ENCODE measurements at regions of chr10 and their contacts with region 1.

Region 1: DNA sequence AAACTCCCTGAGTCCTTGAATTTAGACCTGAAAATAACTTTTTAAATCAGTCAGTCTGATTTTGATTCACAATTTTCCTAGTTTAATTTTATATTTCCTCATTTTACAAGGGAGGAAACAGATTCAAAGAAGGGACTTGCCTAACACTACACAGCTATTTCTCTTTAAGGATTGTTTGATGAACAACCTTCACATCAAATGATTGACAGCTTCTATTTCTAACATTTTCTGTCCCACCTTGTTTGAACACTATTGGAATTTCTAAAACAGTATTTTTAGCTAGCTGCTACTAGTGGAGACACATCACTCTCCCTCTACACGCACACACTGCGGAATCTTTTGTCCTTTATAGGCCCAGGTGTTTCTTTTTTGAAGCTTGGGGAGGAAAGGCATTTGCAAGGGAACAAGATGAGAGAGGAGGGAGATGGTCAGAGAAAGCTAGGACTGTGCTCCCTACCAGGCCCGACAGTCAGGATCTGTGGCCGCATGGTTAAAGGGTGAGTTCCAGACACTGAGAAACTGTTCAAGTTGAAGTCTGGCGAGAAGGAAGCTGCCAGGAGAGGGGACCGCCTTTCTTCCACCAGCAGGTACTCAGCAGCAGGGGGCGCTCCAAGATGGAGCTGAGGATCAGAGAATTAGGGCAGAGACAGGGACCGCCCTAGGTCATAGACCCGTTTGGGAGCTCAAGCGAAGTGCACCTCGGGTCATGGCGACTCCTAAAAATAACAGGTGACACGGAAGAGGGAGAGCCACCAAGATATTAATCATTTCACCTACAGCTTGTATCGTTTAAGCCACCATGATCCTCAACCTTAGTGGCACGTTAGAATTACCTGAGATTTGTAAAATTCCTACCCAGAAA is 49.7 kb downstream of the DNAJC12 start:
- DNase-seq: peak; percentile 83
- H3K4me3 Mint-ChIP-seq: no peak overlapping the region
- H3K27ac Mint-ChIP-seq: peak overlapping the region; percentile 2
- H3K4me1 Mint-ChIP-seq: peaks cover 52% of the 10 kb centered on the region
- H3K27me3 Mint-ChIP-seq: no peaks in the 10 kb centered on the region

Region 2: GRCh38 chr10:67764012-67764822 is 24.0 kb before region 1 on chr10:
- CTCF ChIA-PET with region 1: interaction called, 18 read pairs
- POLR2A ChIA-PET with region 1: interaction called, 9 read pairs
- DNase-seq: peak; percentile 97
- H3K4me3 Mint-ChIP-seq: peak overlapping the region; percentile 72
- H3K27ac Mint-ChIP-seq: peak overlapping the region; percentile 88
- H3K4me1 Mint-ChIP-seq: peaks cover 21% of the 10 kb centered on the region
- H3K27me3 Mint-ChIP-seq: peaks cover 2% of the 10 kb centered on the region

Region 3: GRCh38 chr10:67803588-67804394 is 15.5 kb after region 1 on chr10:
- CTCF ChIA-PET with region 1: interaction called, 11 read pairs
- POLR2A ChIA-PET with region 1: interaction called, 3 read pairs
- DNase-seq: no peak
- H3K4me3 Mint-ChIP-seq: no peak overlapping the region
- H3K27ac Mint-ChIP-seq: peak overlapping the region; percentile 23
- H3K4me1 Mint-ChIP-seq: peaks cover 16% of the 10 kb centered on the region
- H3K27me3 Mint-ChIP-seq: no peaks in the 10 kb centered on the region

Region 4: GRCh38 chr10:67818320-67818719 is 30.1 kb after region 1 on chr10:
- CTCF ChIA-PET with region 1: interaction called, 12 read pairs
- POLR2A ChIA-PET with region 1: no interaction called
- DNase-seq: no peak
- H3K4me3 Mint-ChIP-seq: no peak overlapping the region
- H3K27ac Mint-ChIP-seq: no peak overlapping the region
- H3K4me1 Mint-ChIP-seq: peaks cover 32% of the 10 kb centered on the region
- H3K27me3 Mint-ChIP-seq: no peaks in the 10 kb centered on the region

Region 5: DNA sequence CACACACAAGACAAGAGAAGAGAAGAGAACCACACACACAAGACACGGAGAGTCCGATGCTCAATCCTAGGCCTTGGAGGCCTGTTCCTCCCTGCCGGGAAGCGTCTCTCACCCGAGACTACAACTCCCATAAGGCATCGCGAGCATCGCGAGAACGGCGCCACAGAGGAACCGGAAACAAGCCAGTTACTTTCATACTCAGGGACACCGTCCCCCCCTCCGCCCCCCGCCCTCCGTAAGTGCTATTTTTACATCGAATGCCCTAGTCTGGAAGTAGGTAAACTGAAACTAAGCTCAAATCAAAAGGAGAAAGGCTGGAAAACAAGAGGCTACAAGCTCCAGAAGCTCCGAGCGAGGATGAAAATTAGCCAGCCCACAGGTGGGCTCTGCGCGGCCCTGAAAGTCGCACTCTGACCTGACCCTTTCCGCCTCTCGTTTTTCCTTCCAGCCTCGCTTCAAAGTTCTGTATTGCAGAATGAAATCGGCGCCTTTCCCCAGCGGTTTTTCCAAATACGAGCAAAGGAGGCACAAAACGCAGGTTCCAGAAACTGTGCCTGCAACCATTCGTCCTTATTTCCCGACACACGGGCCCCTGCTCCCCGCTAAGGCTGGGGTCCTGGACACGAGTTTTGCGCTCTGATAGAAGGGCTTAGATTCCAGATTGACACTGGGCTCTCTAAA is 61.2 kb after region 1 on chr10:
- CTCF ChIA-PET with region 1: interaction called, 30 read pairs
- POLR2A ChIA-PET with region 1: interaction called, 6 read pairs
- DNase-seq: peak; percentile 97
- H3K4me3 Mint-ChIP-seq: peak overlapping the region; percentile 86
- H3K27ac Mint-ChIP-seq: peak overlapping the region; percentile 92
- H3K4me1 Mint-ChIP-seq: peaks cover 19% of the 10 kb centered on the region
- H3K27me3 Mint-ChIP-seq: no peaks in the 10 kb centered on the region

Region 6: DNA sequence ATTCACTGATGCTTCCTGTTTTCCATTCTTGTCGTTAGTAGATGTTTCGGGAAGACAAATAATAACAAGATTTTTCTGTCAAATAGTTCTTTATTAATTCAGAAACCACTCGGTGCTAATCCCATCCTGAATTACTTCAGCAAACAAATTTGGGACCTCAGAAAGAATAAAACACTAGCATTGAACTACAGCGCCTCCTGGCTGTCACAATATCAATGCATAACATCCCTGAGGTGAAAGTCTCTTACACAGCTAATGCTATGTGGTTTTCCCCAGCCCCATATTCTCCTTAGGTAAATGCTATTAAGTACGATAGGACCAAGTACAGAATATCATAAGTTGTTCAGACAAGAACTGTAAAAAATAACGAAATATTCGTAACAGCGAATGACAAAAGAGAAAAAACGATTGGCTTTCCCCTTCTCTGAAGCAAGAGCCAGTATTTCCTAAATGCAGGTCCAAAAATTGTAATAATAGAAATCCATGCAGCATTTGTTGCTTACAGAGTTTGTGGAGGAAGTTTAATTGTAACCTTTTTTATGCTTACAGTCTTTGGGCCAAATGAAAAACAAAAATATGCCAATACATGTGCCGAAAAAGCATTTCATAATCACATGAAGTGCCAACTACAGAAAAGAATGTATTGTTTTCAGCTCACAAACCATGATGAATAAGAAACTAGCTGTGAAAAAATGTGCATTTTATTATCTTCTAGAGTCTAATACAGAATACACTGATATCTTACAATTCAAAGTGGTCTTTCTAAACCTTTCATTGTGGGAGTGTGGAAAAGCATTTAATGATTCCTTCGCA is 368.3 kb after region 1 on chr10:
- CTCF ChIA-PET with region 1: interaction called, 33 read pairs
- POLR2A ChIA-PET with region 1: interaction called, 3 read pairs
- DNase-seq: peak; percentile 63
- H3K4me3 Mint-ChIP-seq: no peak overlapping the region
- H3K27ac Mint-ChIP-seq: no peak overlapping the region
- H3K4me1 Mint-ChIP-seq: peaks cover 3% of the 10 kb centered on the region
- H3K27me3 Mint-ChIP-seq: no peaks in the 10 kb centered on the region

Measured in activated CD4-positive, alpha-beta memory T cell treated with anti-CD3 and anti-CD28 coated beads, Interleukin-2, amount 10 ng/mL, durations not matched to agents 7 days and 5 days (primary cell).